ENCODE measurements at regions of chr1 and their contacts with region 1.

Region 1: GRCh38 chr1:202184750-202185460 is 8.7 kb upstream of the LGR6 start:
- DNase-seq: peak; percentile 24 to 80 (median 70)
- ATAC-seq: peak; percentile 61
- H3K4me3 ChIP-seq: no peak overlapping the region
- H3K4me3 Mint-ChIP-seq: no peak overlapping the region
- H3K27ac ChIP-seq: no peak overlapping the region
- H3K27ac Mint-ChIP-seq: no peak overlapping the region
- H3K4me1 ChIP-seq: peaks cover 13% of the 10 kb centered on the region
- H3K4me1 Mint-ChIP-seq: peaks cover 13% of the 10 kb centered on the region
- H3K27me3 ChIP-seq: no peaks in the 10 kb centered on the region
- H3K27me3 Mint-ChIP-seq: peaks cover 2% of the 10 kb centered on the region
- CTCF ChIP-seq: peak; percentile 64

Region 2: GRCh38 chr1:200437556-200438203 is 1747.2 kb before region 1 on chr1:
- CTCF ChIA-PET with region 1: no interaction called
- POLR2A ChIA-PET with region 1: no interaction called
- intact Hi-C with region 1: loop called in 1 of 2 experiments (anchors 10 kb)
- DNase-seq: peak in 2 of 9 experiments; percentile 5 to 33
- ATAC-seq: no peak
- H3K4me3 ChIP-seq: peak overlapping the region; percentile 10 to 29
- H3K4me3 Mint-ChIP-seq: peak overlapping the region; percentile 78
- H3K27ac ChIP-seq: no peak overlapping the region
- H3K27ac Mint-ChIP-seq: peak overlapping the region; percentile 74
- H3K4me1 ChIP-seq: peaks cover 4% of the 10 kb centered on the region
- H3K4me1 Mint-ChIP-seq: peaks cover 12% of the 10 kb centered on the region
- H3K27me3 ChIP-seq: no peaks in the 10 kb centered on the region
- H3K27me3 Mint-ChIP-seq: no peaks in the 10 kb centered on the region
- CTCF ChIP-seq: no peak

Region 3: GRCh38 chr1:202235856-202236837 is 51.2 kb after region 1 on chr1:
- CTCF ChIA-PET with region 1: no interaction called
- POLR2A ChIA-PET with region 1: no interaction called
- intact Hi-C with region 1: loop called in 1 of 2 experiments (anchors 5 kb)
- DNase-seq: peak; percentile 34 to 76 (median 66)
- ATAC-seq: peak; percentile 89
- H3K4me3 ChIP-seq: no peak overlapping the region
- H3K4me3 Mint-ChIP-seq: no peak overlapping the region
- H3K27ac ChIP-seq: no peak overlapping the region
- H3K27ac Mint-ChIP-seq: no peak overlapping the region
- H3K4me1 ChIP-seq: no peaks in the 10 kb centered on the region
- H3K4me1 Mint-ChIP-seq: no peaks in the 10 kb centered on the region
- H3K27me3 ChIP-seq: no peaks in the 10 kb centered on the region
- H3K27me3 Mint-ChIP-seq: peaks cover 12% of the 10 kb centered on the region
- CTCF ChIP-seq: peak; percentile 76

Region 4: GRCh38 chr1:202247894-202248681 is 63.2 kb after region 1 on chr1:
- CTCF ChIA-PET with region 1: no interaction called
- POLR2A ChIA-PET with region 1: no interaction called
- intact Hi-C with region 1: no loop called
- DNase-seq: no peak
- ATAC-seq: no peak
- H3K4me3 ChIP-seq: no peak overlapping the region
- H3K4me3 Mint-ChIP-seq: no peak overlapping the region
- H3K27ac ChIP-seq: no peak overlapping the region
- H3K27ac Mint-ChIP-seq: no peak overlapping the region
- H3K4me1 ChIP-seq: no peaks in the 10 kb centered on the region
- H3K4me1 Mint-ChIP-seq: no peaks in the 10 kb centered on the region
- H3K27me3 ChIP-seq: no peaks in the 10 kb centered on the region
- H3K27me3 Mint-ChIP-seq: peaks cover 2% of the 10 kb centered on the region
- CTCF ChIP-seq: no peak

Region 5: DNA sequence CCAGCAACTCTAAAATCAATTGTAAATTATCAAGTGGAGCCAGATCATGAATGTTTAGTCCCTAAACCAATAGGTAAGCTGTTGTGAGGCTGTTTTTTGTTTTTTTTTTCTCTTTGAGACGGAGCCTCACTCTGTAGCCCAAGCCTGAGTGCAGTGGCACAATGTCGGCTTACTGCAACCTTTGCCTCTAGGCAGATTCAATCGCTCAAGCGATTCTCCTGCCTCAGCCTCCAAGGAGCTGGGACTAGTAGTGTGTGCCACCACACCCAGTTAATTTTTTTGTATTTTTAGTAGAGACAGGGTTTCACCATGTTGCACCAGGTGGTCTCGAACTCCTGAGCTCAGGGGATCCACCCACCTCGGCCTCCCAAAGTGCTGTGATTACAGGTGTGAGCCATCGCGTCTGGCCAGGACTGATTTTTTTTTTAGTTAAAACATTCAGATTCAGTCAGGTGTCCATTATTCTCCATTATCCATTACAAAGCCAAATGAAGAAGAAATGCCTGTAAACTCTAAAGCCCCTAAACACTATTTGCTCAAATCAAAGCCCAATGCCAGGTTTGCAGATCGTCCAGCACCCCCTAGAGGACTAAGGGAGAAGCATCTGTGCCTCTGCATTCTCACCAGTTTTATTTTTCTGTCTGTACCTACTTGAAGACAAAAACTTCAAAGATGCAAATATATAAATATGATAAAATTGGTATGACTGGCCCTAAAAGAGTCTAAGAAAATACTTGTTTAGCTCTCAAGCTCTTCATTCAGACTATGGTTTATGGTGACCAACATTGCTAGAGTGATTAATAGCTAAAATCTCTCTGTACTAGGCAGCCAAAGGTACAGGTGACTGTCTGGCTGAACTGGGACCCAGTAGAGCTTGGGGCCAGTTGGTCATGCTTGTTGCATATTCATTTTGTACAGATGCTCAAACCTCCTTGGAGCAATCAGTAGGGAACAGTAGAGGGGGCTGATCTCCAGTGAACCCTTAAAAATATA is 386.7 kb after region 1 on chr1:
- CTCF ChIA-PET with region 1: no interaction called
- POLR2A ChIA-PET with region 1: no interaction called
- intact Hi-C with region 1: loop called in 1 of 2 experiments (anchors 5 kb)
- DNase-seq: peak in 2 of 9 experiments; percentile 37 to 43
- ATAC-seq: no peak
- H3K4me3 ChIP-seq: no peak overlapping the region
- H3K4me3 Mint-ChIP-seq: no peak overlapping the region
- H3K27ac ChIP-seq: no peak overlapping the region
- H3K27ac Mint-ChIP-seq: no peak overlapping the region
- H3K4me1 ChIP-seq: no peaks in the 10 kb centered on the region
- H3K4me1 Mint-ChIP-seq: no peaks in the 10 kb centered on the region
- H3K27me3 ChIP-seq: no peaks in the 10 kb centered on the region
- H3K27me3 Mint-ChIP-seq: no peaks in the 10 kb centered on the region
- CTCF ChIP-seq: peak; percentile 68